HepG2 (cell line): ENCODE measurements at regions of chr5 and their contacts with region 1.

Region 1: DNA sequence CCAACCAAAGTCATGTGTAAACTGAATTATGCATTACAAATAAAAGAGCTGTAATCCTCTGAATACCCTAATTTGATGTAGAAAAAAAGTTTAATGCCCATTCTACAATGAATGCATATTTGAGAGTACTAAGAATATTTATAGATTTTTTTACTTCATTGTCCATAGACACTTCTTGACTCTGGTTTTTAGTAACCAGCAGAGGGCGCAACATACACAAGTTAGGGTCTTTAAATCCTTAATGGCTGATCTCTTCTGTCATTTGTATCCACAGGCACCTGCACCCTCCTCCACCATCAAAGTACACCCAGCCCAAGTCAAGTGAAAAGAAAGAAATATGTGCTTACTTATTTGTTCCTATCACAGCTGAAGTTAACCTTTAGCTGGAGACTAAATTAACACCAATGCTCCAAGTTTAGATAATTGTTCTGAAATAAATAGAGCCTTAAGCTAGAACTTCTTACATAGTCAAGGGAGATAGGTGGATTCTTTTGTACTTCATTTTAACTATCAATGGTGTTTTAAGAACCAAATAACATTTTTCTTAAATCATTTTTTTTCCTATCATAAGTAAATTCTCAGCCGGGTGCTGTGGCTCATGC is 524.2 kb upstream of the DAB2 start:
- DNase-seq: peak; percentile 68
- ATAC-seq: peak; percentile 86
- H3K4me3 ChIP-seq: no peak overlapping the region
- H3K27ac ChIP-seq: no peak overlapping the region
- H3K4me1 ChIP-seq: no peaks in the 10 kb centered on the region
- H3K27me3 ChIP-seq: no peaks in the 10 kb centered on the region
- CTCF ChIP-seq: peak; percentile 64
- EP300 ChIP-seq: no peak
- POLR2A ChIP-seq: no peak
- RAD21 ChIP-seq: peak; percentile 42; the same call in 1 of the 2 replicates

Region 2: DNA sequence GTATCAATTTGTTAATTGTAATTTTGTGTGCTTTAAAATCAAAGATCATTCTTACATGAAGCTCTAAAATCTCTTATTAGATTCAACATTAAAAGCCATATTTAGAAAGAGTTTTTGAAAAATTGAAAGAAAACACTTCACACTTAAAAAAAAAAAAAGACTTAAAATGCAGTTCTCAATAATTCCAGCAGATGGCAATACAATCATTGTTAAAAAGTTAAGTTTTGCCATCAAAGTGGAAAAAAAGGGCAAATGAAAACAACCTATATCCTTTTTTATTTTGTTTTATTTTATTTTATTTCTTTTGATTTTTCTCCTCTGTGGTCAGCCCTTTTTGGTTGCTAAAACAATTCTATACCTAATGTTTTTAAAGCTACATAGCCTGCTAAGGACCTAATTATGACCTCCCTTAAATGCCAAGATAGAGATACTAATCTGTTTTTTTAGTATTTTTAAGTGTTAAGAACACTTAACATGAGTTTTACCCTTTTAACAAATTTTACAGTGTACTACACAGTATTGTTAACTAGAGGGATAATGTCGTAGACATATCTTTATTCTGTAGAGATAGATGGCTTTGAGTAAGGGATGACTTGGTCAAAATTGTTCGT is 370.0 kb before region 1 on chr5:
- CTCF ChIA-PET with region 1: no interaction called
- POLR2A ChIA-PET with region 1: no interaction called
- in situ Hi-C with region 1: no loop called
- intact Hi-C with region 1: loop called (anchors 5 kb)
- DNase-seq: no peak
- ATAC-seq: no peak
- H3K4me3 ChIP-seq: no peak overlapping the region
- H3K27ac ChIP-seq: no peak overlapping the region
- H3K4me1 ChIP-seq: no peaks in the 10 kb centered on the region
- H3K27me3 ChIP-seq: no peaks in the 10 kb centered on the region
- CTCF ChIP-seq: no peak
- EP300 ChIP-seq: no peak
- POLR2A ChIP-seq: no peak
- RAD21 ChIP-seq: no peak

Region 3: GRCh38 chr5:39714036-39714698 is 234.8 kb before region 1 on chr5:
- CTCF ChIA-PET with region 1: no interaction called
- POLR2A ChIA-PET with region 1: no interaction called
- in situ Hi-C with region 1: no loop called
- intact Hi-C with region 1: loop called (anchors 1 kb)
- DNase-seq: peak; percentile 41
- ATAC-seq: peak; percentile 53
- H3K4me3 ChIP-seq: no peak overlapping the region
- H3K27ac ChIP-seq: no peak overlapping the region
- H3K4me1 ChIP-seq: peaks cover 6% of the 10 kb centered on the region; the same call in 1 of the 2 replicates
- H3K27me3 ChIP-seq: no peaks in the 10 kb centered on the region
- CTCF ChIP-seq: peak; percentile 63
- EP300 ChIP-seq: no peak
- POLR2A ChIP-seq: no peak
- RAD21 ChIP-seq: 0 out of 2 replicates have a peak, but pooled peaks have one; percentile 18

Region 4: GRCh38 chr5:40112875-40113274 is 163.9 kb after region 1 on chr5:
- CTCF ChIA-PET with region 1: no interaction called
- POLR2A ChIA-PET with region 1: no interaction called
- in situ Hi-C with region 1: no loop called
- intact Hi-C with region 1: no loop called
- DNase-seq: no peak
- ATAC-seq: no peak
- H3K4me3 ChIP-seq: no peak overlapping the region
- H3K27ac ChIP-seq: no peak overlapping the region
- H3K4me1 ChIP-seq: no peaks in the 10 kb centered on the region
- H3K27me3 ChIP-seq: no peaks in the 10 kb centered on the region
- CTCF ChIP-seq: no peak
- EP300 ChIP-seq: no peak
- POLR2A ChIP-seq: no peak
- RAD21 ChIP-seq: no peak

Region 5: GRCh38 chr5:40736103-40736875 is 787.3 kb after region 1 on chr5:
- CTCF ChIA-PET with region 1: interaction called, 6 read pairs
- POLR2A ChIA-PET with region 1: no interaction called
- in situ Hi-C with region 1: no loop called
- intact Hi-C with region 1: loop called (anchors 2 kb)
- DNase-seq: peak; percentile 48
- ATAC-seq: peak; percentile 69; the same call in 2 of the 3 replicates
- H3K4me3 ChIP-seq: no peak overlapping the region
- H3K27ac ChIP-seq: no peak overlapping the region
- H3K4me1 ChIP-seq: peaks cover 24% of the 10 kb centered on the region
- H3K27me3 ChIP-seq: no peaks in the 10 kb centered on the region
- CTCF ChIP-seq: peak; percentile 72
- EP300 ChIP-seq: no peak
- POLR2A ChIP-seq: no peak
- RAD21 ChIP-seq: peak; percentile 52; the same call in 1 of the 2 replicates

Region 6: DNA sequence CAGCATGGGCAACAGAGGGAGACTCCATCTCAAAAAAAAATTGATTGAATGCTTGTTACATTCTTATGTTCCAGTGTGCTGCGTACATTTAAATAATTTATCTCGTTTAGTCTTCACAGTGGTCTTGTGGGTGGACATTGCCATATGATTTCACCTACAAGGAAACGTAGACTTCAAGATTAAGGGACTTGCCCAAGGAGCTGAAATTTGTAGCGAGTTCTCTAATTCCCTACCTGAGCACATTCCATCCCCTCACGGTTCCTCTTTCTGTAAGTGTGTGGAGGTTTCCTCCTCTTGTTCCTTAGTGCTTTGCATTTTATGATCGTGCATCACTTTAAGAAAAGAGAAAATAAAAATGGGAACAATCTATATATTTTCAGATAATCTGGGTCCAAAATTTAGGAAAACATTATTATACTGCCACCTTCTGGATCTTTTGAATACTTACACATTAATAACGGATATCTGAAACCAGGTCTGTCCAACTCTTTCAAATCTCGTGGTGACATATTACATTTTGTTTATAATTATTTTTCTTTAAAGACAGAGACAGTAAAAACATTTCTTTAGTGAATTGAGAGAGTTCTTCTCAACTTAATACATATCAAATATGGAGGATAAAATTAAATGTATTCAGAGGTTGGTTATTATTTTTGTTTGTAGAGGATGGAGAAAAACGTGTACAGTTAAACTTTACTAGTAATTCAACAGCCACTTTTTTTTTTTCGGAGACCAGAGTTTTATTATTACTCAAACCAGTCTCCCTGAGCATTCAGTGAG is 930.4 kb after region 1 on chr5:
- CTCF ChIA-PET with region 1: no interaction called
- POLR2A ChIA-PET with region 1: no interaction called
- in situ Hi-C with region 1: no loop called
- intact Hi-C with region 1: loop called (anchors 5 kb)
- DNase-seq: peak; percentile 10
- ATAC-seq: peak; percentile 33; the same call in 1 of the 3 replicates
- H3K4me3 ChIP-seq: no peak overlapping the region
- H3K27ac ChIP-seq: no peak overlapping the region
- H3K4me1 ChIP-seq: peaks cover 15% of the 10 kb centered on the region
- H3K27me3 ChIP-seq: no peaks in the 10 kb centered on the region
- CTCF ChIP-seq: peak; percentile 51
- EP300 ChIP-seq: no peak
- POLR2A ChIP-seq: no peak
- RAD21 ChIP-seq: 0 out of 2 replicates have a peak, but pooled peaks have one; percentile 27